ENCODE measurements at regions of chr12 and their contacts with region 1.

Region 1: DNA sequence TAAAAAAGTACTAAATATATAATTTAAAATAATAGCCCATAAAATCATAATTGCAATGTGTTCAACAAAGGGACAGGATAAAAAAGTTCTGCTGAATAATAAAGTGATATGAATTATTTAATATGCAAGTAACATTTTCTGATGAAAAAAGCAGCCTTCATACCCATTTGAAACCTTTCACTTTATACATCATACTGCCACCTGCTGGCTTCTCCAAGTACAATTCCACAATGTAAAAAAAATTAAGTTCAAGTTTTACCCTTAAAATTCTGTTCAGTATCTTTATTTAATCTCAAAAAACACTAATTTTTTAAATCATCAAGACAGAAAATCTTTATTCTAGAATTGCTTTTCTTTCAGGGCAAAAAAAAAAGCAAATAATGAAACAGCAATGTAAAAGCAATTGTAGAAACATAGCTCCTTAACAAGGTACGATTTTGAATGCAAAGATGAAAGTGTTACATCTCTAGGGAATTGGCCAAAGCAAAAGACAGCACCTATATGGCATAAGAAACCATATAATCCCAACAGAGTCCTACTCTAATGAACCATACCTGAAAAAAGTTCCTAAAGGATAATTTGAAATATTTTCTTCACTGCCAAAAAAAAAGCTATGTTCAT is 15.0 kb downstream of the MDM1 start:
- DNase-seq: peak in 1 of 10 donors; percentile 21
- H3K4me3 ChIP-seq: no peak overlapping the region
- H3K27ac ChIP-seq: no peak overlapping the region
- H3K27me3 ChIP-seq: no peaks in the 10 kb centered on the region
- CTCF ChIP-seq: peak; percentile 67 to 91 (median 81)

Region 2: DNA sequence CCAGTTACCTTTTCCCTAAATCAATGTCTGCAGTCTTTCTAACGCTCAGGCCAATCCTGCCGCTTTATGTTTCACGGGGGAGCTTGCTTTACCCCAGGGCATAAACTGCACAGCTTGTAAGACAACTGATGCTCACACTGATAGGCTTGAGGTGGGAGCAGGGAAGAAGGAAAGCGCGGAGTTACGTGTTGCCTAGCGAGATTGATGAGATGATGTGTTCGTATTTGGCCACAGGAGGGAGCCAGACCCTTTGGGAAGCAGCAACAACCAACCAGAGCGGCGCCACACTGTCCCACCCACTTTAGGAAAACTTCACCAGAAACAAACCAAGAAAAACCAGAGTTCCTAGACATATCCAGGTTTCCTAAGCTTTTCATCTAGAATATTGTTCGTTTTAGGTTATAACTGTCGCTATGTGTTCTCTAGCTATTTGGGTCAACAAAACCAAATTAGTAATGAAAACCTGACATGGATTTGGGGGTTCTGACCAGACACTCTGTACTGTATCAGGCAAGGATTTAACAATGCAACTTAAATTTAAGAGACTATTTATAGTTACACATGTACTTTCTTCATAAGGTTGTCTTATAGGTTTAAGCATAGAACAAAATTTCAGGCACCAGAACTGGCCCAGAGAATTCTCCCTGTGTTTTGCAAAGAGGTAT is 93.9 kb before region 1 on chr12:
- intact Hi-C with region 1: loop called (anchors 1 to 2 kb)
- DNase-seq: peak; percentile 43 to 87 (median 74)
- H3K4me3 ChIP-seq: peak overlapping the region in 44 of 59 donors; percentile 8 to 52 (median 33)
- H3K27ac ChIP-seq: no peak overlapping the region
- H3K27me3 ChIP-seq: no peaks in the 10 kb centered on the region
- CTCF ChIP-seq: peak; percentile 51 to 91 (median 84)

Region 3: GRCh38 chr12:68559984-68560850 is 243.1 kb after region 1 on chr12:
- intact Hi-C with region 1: no loop called
- DNase-seq: no peak
- H3K4me3 ChIP-seq: no peak overlapping the region
- H3K27ac ChIP-seq: no peak overlapping the region
- H3K27me3 ChIP-seq: no peaks in the 10 kb centered on the region
- CTCF ChIP-seq: no peak

Measured in dorsolateral prefrontal cortex (tissue), 120 donors.